ENCODE measurements at regions of chr10 and their contacts with region 1.

Region 1: DNA sequence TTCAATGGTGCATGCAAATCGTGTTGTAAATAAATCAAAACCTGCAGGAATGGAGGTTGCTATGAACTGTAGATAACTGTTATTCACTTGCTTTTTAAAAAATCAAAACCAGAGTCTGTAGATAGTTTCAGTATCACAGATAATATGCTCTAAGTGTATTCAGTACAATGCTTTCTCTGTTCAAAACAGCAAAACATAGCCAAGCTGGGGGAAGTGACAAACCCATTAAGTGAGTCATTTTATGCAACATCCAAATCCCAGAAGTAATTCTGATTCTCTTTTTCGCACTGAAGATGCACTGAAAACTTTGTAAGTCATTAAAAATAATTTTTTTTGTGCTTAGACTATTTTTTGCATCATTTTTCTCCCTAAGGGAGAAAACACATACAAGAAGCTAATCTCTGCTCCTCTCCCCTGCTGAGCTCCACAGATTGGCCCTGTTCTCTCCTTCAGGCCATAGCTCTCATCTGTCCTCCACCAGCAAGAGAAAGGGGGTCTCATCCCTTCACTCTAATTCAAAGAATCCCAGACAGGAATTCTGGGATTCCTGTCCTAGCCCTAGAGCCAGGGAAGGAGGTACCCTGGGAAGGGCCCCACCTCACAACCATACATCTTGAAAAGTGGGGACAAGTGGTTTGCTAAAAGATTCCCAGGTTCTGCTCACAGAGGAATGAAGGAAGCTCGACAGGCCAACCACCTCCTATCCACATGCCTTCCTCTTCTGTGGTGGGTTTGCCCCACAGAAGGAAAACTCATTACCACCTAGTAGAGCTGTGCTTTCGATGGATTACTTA is 4.9 kb downstream of the PRTFDC1 start:
- DNase-seq: peak; percentile 67
- ATAC-seq: peak; percentile 71
- H3K4me3 ChIP-seq: no peak overlapping the region
- H3K27ac ChIP-seq: peak overlapping the region; percentile 83
- H3K4me1 ChIP-seq: peaks cover 42% of the 10 kb centered on the region
- H3K27me3 ChIP-seq: no peaks in the 10 kb centered on the region
- CTCF ChIP-seq: no peak

Region 2: DNA sequence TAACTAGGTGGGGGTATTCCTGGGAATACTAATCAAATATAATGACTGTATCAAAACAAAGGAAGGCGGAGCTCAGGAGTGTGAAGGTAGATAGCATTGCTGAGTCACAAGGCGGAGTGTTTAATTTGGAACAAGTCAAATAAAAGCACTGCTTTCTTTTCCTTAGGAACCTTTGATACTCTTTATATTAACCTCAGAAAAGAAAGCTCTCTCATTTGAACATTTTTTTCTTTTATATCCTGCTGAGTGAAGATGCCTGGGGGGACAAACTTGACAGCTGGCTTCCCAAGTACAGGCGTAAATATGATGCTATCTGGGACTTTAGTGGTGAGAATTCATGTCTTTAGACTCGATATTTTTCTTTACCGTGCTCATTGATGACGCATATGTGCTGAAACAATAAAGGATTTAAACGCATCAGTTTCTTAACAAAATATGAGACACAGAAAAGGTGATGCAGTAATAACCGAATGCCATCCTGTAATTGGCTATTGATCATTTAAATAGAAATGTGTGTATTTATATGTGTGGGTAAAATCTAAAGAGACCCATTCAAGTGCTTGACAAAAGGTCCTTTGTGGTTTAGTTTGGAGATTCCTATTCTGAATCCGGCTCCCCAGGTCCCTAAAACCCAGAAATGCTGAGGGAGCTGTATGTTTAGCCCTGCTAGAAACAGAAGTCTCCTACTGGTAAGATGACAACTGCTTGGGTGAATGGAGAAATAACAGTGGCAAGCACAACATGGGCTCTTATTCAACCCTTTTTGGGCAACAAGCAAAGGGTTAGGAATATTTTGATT is 97.8 kb before region 1 on chr10:
- CTCF ChIA-PET with region 1: interaction called, 3 read pairs
- POLR2A ChIA-PET with region 1: no interaction called
- intact Hi-C with region 1: loop called (anchors 5 kb)
- DNase-seq: peak; percentile 82
- ATAC-seq: peak; percentile 95
- H3K4me3 ChIP-seq: peak overlapping the region; percentile 44
- H3K27ac ChIP-seq: peak overlapping the region; percentile 98
- H3K4me1 ChIP-seq: peaks cover 29% of the 10 kb centered on the region
- H3K27me3 ChIP-seq: no peaks in the 10 kb centered on the region
- CTCF ChIP-seq: no peak

Region 3: GRCh38 chr10:25417611-25418010 is 470.1 kb after region 1 on chr10:
- CTCF ChIA-PET with region 1: no interaction called
- POLR2A ChIA-PET with region 1: no interaction called
- intact Hi-C with region 1: no loop called
- DNase-seq: no peak
- ATAC-seq: no peak
- H3K4me3 ChIP-seq: no peak overlapping the region
- H3K27ac ChIP-seq: no peak overlapping the region
- H3K4me1 ChIP-seq: no peaks in the 10 kb centered on the region
- H3K27me3 ChIP-seq: no peaks in the 10 kb centered on the region
- CTCF ChIP-seq: no peak